ENCODE measurements at regions of chr2 and their contacts with region 1.

Region 1: GRCh38 chr2:118061135-118061955 is 26.9 kb upstream of the INSIG2 start:
- DNase-seq: no peak
- H3K4me3 Mint-ChIP-seq: no peak overlapping the region
- H3K27ac Mint-ChIP-seq: no peak overlapping the region
- H3K4me1 Mint-ChIP-seq: peaks cover 7% of the 10 kb centered on the region
- H3K27me3 Mint-ChIP-seq: peaks cover 22% of the 10 kb centered on the region

Region 2: DNA sequence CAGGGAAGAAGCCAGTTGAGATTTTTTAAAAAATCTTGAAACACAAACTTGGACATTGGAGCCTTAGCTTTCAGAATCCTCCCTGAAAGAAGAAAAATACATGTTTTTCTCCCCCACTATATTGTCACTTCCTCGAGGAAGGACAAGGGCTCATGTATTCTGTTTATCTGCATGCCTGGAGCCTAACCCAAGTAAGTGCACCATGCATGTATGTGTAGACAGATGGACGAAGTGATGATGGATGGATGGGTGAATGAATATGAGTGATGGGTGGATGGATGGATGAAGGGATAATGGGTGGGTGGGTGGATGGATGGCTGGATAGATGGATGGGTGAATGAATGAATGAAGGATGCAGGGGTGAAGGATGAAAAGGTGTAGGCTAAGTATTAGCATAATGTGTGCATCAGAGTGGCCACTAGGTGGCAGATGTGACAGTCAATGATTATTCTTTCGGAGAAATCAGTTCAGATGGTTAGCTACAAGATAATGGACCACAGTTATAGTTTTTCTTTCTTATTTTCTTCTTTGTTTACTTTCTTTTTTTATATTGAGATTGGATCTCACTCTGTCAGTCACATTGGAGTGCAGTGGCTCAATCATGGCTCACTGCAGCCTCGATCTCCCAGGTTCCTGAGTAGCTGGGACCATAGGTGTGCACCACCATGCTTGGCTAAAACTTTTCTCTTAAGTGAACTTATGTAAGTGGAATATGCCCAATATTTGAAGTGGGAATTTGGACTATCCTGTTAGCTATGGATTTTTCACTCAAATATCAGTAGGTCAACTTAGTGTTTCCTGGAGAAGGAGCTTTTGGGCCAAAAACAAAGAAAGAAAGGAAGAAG is 29.0 kb before region 1 on chr2:
- intact Hi-C with region 1: loop called (anchors 2 kb)
- DNase-seq: peak; percentile 79
- H3K4me3 Mint-ChIP-seq: no peak overlapping the region
- H3K27ac Mint-ChIP-seq: no peak overlapping the region
- H3K4me1 Mint-ChIP-seq: peaks cover 2% of the 10 kb centered on the region
- H3K27me3 Mint-ChIP-seq: peaks cover 51% of the 10 kb centered on the region

Region 3: GRCh38 chr2:118269408-118270051 is 208.2 kb after region 1 on chr2:
- intact Hi-C with region 1: no loop called
- DNase-seq: no peak
- H3K4me3 Mint-ChIP-seq: no peak overlapping the region
- H3K27ac Mint-ChIP-seq: no peak overlapping the region
- H3K4me1 Mint-ChIP-seq: no peaks in the 10 kb centered on the region
- H3K27me3 Mint-ChIP-seq: peaks cover 6% of the 10 kb centered on the region